ENCODE measurements at regions of chr4 and their contacts with region 1.

Region 1: GRCh38 chr4:114593526-114593925 is 5.1 kb upstream of the UGT8 start:
- DNase-seq: no peak
- H3K4me3 Mint-ChIP-seq: no peak overlapping the region
- H3K27ac Mint-ChIP-seq: no peak overlapping the region
- H3K4me1 Mint-ChIP-seq: peaks cover 4% of the 10 kb centered on the region
- H3K27me3 Mint-ChIP-seq: peaks cover 25% of the 10 kb centered on the region

Region 2: DNA sequence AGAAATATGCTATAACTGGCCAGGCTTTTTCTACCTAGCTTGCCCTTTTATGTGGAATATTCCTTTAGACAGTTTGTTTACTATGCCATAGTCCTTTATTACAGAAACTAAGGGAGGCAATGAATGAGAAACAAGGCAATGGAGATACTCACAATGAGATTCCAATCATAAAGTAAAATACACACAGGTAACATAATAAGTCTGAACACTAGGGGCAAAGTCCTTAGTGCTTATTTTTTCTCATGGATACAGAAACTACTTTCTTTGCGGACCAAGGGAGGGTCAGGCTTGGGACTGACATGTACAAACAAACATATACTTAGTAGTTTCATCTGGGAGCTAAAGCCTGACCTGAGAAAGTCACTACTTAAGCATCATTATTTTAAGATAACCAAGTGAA is 10.9 kb before region 1 on chr4:
- CTCF ChIA-PET with region 1: no interaction called
- intact Hi-C with region 1: loop called (anchors 1 kb)
- DNase-seq: no peak
- H3K4me3 Mint-ChIP-seq: no peak overlapping the region
- H3K27ac Mint-ChIP-seq: no peak overlapping the region
- H3K4me1 Mint-ChIP-seq: no peaks in the 10 kb centered on the region
- H3K27me3 Mint-ChIP-seq: peaks cover 9% of the 10 kb centered on the region